ENCODE measurements at regions of chr11 and their contacts with region 1.

Region 1: DNA sequence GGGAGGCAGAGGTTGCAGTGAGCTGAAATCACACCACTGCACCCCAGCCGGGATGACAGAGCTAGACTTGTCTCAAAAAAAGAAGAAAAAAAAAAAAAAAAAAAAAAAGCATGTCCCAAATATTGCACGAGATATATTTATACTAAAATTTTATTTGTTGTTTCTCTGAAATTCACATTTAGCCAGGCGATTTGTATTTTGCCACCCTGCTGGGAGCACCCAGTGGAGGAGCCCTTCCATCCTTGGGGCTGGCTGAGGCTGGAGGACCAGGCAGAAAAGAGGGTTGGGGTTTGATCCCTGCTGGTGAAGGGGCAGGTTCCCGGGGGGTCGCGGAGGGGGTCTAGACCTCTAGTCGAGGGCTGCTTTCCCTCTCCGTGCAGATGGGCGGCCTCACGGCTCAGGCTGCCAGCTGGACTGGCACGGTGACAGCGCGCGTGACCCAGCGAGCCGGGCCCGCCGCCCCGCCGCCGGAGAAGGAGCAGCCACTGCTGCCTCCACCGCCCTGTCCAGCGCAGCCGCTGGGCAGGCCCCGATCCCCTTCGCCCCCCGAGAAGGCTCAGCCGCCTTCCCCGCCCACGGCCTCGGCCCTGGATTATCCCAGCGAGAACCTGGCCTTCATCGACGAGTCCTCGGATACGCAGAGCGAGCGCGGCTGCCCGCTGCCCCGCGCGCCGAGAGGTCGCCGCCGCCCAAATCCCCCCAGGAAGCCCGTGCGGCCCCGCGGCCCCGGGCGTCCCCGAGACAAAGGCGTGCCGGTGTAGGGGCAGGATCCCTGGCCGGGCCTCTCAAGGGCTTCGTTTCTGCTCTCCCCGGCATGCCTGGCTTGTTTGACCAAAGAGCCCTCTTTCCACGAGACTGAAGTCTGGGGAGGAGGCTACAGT is 952 bp upstream of the CATSPERZ start:
- DNase-seq: peak in 1 of 5 donors; percentile 19
- H3K4me3 ChIP-seq: no peak overlapping the region
- H3K4me3 Mint-ChIP-seq: peak overlapping the region; percentile 11 to 86 (median 77)
- H3K27ac ChIP-seq: no peak overlapping the region
- H3K27ac Mint-ChIP-seq: peak overlapping the region in 6 of 8 donors; percentile 34 to 78 (median 38)
- H3K4me1 ChIP-seq: peaks cover 22% of the 10 kb centered on the region
- H3K4me1 Mint-ChIP-seq: peaks cover 18 to 36% (median 20%) of the 10 kb centered on the region in 3 donors
- H3K27me3 ChIP-seq: peaks cover 64% of the 10 kb centered on the region
- H3K27me3 Mint-ChIP-seq: peaks cover 58 to 66% of the 10 kb centered on the region in 2 donors

Region 2: DNA sequence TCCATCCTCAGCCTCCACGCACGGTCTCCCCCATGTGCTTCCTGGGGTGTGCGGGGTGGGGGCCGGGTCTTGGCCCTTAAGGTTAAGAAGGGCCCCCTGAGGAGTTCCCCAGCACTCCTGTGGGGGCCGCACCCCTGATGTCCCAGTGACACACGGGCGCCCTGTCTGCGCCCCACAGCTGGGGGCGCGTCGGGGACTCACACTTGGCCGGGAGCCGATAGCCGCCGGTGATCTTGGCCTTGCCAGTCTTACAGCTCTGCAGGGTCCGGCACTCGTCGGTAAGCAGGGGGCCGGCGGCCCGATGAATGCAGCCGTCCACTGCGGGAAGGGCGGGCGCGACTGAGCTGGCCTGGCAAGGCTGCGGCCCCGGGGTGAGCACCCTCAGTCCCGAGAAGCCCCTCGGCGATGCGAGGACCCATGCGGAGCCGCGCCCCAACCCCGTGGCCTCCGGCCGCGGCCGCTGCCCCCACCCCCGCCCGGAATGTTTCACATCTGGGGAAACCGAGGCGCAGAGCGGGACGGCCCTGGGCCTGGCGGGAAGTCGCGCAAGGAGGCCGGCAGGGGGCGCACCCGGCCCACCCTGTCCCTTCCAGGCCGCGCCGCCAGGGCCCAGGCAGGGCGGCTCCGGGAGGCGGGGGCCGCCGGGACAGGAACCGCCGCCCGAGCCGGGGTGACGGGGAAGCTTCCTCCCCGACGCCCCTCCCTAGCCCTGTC is 299.0 kb before region 1 on chr11:
- CTCF ChIA-PET with region 1: interaction called, 15 read pairs
- POLR2A ChIA-PET with region 1: no interaction called
- DNase-seq: peak; percentile 67 to 78 (median 70)
- H3K4me3 ChIP-seq: no peak overlapping the region
- H3K4me3 Mint-ChIP-seq: peak overlapping the region in 5 of 7 donors; percentile 54 to 84 (median 60)
- H3K27ac ChIP-seq: no peak overlapping the region
- H3K27ac Mint-ChIP-seq: peak overlapping the region in 1 of 8 donors; percentile 33
- H3K4me1 ChIP-seq: peaks cover 7% of the 10 kb centered on the region
- H3K4me1 Mint-ChIP-seq: peaks cover 0 to 24% (median 4%) of the 10 kb centered on the region in 3 donors
- H3K27me3 ChIP-seq: no peaks in the 10 kb centered on the region
- H3K27me3 Mint-ChIP-seq: no peaks in the 10 kb centered on the region

Region 3: DNA sequence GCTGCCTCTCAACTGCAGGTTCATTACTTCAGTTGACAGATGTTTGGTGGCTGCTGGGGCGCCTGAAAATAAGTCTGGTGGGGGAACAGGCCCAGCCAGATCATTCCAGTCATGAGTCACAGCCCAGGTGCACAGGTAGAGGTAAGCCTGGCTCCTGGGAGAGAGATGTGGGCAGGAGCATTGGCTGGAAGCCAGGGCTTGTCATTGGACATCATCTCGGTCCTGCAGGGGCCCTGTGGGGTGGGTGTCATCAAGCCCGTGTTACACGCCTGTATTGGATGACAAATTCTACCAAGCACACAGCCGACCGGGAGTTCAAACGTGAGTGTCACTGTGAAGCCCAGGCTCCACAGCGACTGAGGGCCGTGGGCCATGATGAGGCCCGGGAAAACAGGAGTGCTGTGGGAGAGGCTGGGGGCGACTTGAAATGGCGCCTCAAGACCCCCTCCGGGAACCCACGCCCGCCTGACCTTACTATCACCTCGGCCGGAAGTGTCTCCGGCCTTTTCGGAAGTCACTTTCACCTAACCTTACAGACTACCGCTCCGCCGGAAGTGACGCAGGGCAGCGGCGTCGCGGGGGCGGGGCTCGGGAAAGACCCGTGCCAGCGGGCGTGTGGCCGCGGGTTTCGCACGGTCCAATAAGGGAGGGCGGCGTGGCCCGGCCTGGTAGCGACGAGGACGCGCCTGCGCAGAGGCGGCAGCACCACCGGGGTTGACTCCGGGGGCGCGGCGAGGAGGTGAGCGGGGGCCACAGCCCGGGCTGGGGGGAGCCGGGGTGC is 58.6 kb before region 1 on chr11 and contains the start of gene FKBP2:
- CTCF ChIA-PET with region 1: interaction called, 97 read pairs
- POLR2A ChIA-PET with region 1: interaction called, 15 read pairs
- DNase-seq: peak; percentile 97 to 99 (median 99)
- H3K4me3 ChIP-seq: peak within 1 kb of the TSS; percentile 76
- H3K4me3 Mint-ChIP-seq: peak within 1 kb of the TSS; percentile 87 to 97 (median 90)
- H3K27ac ChIP-seq: peak within 1 kb of the TSS; percentile 99
- H3K27ac Mint-ChIP-seq: peak within 1 kb of the TSS; percentile 99 to 100 (median 100)
- H3K4me1 ChIP-seq: peaks cover 36% of the 10 kb centered on the region
- H3K4me1 Mint-ChIP-seq: peaks cover 18 to 62% (median 23%) of the 10 kb centered on the region in 3 donors
- H3K27me3 ChIP-seq: no peaks in the 10 kb centered on the region
- H3K27me3 Mint-ChIP-seq: no peaks in the 10 kb centered on the region
- total RNA-seq, gene FKBP2: 27.9 to 28.4 TPM

Region 4: GRCh38 chr11:64767344-64768299 is 468.4 kb after region 1 on chr11:
- CTCF ChIA-PET with region 1: no interaction called
- POLR2A ChIA-PET with region 1: no interaction called
- DNase-seq: peak; percentile 72 to 88 (median 79)
- H3K4me3 ChIP-seq: no peak overlapping the region
- H3K4me3 Mint-ChIP-seq: peak overlapping the region; percentile 33 to 83 (median 64)
- H3K27ac ChIP-seq: peak overlapping the region; percentile 17
- H3K27ac Mint-ChIP-seq: peak overlapping the region; percentile 84 to 95 (median 89)
- H3K4me1 ChIP-seq: peaks cover 91% of the 10 kb centered on the region
- H3K4me1 Mint-ChIP-seq: peaks cover 80 to 94% (median 89%) of the 10 kb centered on the region in 3 donors
- H3K27me3 ChIP-seq: no peaks in the 10 kb centered on the region
- H3K27me3 Mint-ChIP-seq: peaks cover 0 to 6% of the 10 kb centered on the region in 2 donors